ENCODE measurements at regions of chr17 and their contacts with region 1.

Region 1: DNA sequence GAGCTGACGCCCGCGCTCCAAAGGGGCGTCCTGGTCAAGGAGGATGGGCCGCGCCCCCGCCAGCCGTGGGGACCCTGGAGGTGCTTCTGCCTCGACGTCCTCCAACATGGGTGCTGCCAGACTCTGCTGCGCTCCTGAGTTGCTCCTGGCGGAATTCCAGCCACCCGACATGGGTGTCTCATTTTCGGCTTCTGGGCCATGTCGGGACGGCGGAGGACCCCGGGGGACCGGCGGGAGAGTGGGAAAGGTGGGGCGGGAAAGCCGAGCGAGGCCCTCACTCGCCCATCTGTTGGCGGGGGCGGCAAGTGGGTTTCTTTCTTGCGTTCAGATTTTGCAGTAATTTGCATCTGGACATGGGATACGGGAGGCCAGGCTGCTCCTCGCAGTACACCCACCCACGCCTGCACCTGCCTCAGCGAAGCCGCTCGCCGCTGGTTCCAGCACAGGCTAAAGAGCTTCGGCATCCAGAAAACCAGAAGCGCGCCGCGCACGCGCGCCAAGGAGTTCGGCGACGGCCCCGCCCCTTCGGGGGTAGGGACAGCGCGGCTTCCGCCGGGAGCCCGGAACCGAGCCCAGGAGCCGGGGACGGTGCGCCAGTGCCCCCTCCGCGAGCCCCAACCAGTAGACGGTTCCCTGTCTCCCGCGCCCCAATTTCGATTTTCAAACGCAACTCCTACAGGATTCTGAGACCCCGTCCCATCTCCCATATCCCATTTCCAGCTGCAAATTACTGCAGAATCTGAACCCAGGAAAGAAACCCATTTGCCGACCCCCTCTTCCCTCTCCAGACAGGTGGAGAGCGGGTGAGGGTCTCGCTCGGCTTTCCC is at the start of gene ARMC7:
- DNase-seq: peak; percentile 92
- H3K4me3 Mint-ChIP-seq: peak within 1 kb of the TSS; percentile 84
- H3K27ac Mint-ChIP-seq: peak within 1 kb of the TSS; percentile 79
- H3K4me1 Mint-ChIP-seq: peaks cover 41% of the 10 kb centered on the region
- H3K27me3 Mint-ChIP-seq: no peaks in the 10 kb centered on the region
- total RNA-seq, gene ARMC7: 17.1 to 17.9 TPM

Region 2: DNA sequence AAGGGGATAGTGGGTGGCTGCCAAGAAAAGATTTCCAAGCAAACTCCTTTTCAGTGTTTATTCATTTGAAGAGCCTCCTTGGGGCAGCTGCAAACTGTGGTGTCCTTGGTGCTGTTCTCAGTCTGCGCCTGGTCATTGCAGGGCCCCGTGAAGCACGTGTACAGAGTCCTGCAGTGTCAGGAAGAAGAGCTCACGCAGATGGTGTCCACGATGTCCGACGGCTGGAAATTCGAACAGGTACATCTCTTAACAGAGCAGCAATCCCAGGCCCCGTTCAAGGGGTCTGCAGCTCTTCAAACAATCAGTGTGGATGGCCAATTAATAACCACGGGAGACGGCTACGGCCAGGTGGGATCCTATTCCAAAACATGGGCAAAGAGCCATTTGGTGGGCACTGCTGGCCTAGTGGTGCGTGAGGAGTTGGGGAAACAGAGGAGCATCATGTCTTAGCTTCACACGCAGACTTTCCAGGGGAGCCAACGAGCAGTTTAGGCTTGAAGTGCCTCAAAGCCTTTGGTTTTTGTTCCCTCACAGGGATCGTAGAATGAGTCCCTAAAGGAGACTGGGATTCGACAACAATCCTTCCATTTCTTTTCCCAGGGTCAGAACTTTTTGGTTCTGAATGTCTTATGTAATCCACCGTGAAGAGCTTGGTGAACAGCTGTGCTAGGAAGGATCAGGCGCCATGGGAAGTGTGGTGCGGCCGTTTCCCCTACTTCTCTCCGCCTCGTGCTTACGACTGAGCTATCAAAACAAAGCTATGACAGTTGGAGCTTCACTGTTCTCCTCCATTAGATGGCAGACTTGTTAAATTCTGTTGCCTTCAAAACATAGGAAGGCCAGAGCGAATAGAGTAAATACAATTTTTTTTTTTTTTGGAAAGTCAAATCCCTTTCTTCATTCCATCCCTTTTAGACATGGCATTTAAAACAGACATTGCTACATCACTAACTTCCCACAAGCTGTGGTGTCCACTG is 50.0 kb before region 1 on chr17:
- CTCF ChIA-PET with region 1: interaction called, 19 read pairs
- POLR2A ChIA-PET with region 1: interaction called, 5 read pairs
- DNase-seq: no peak
- H3K4me3 Mint-ChIP-seq: no peak overlapping the region
- H3K27ac Mint-ChIP-seq: no peak overlapping the region
- H3K4me1 Mint-ChIP-seq: peaks cover 13% of the 10 kb centered on the region
- H3K27me3 Mint-ChIP-seq: no peaks in the 10 kb centered on the region

Region 3: DNA sequence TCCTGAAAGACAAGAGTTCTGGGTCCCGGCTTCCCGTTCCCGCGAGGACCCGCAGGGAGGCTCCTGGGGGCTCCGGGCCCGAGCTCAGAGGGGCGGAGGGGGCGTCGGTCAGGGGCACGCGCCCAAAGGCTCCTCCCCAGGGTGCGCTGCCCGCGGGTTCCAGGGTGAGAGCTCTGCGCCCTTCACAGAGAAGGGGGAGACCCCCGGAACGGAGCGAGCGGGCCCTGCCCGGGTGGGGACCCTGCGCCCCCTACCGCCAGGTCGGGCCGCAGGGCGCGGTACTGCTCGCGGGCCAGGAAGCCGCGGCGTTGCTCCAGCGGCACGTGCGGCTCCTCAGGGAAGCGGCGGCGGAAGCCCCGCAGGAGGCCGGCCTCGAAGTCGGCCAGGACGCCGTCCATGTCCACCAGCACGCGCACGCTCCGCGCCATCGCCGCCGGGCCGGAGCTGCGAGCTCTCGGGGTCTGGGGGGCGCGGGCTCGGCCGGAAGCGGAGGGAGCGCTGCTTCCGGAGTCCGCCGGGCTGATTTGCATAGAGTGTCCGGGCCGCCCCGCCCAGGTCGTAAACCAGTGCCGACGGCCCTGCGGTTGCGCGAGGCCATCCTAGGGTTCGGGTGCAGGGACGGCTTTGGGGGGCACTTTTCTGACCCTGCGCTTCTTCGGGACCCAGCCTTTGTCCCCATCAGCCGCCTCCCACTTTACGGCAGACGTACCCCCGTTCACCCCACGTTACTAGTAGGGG is 21.8 kb after region 1 on chr17 and contains the start of gene NT5C:
- CTCF ChIA-PET with region 1: interaction called, 130 read pairs
- POLR2A ChIA-PET with region 1: interaction called, 65 read pairs
- DNase-seq: peak; percentile 75
- H3K4me3 Mint-ChIP-seq: peak within 1 kb of the TSS; percentile 86
- H3K27ac Mint-ChIP-seq: peak within 1 kb of the TSS; percentile 85
- H3K4me1 Mint-ChIP-seq: peaks cover 41% of the 10 kb centered on the region
- H3K27me3 Mint-ChIP-seq: no peaks in the 10 kb centered on the region
- total RNA-seq, gene NT5C: 68.2 to 69.4 TPM

Region 4: GRCh38 chr17:75173526-75173925 is 63.9 kb after region 1 on chr17:
- CTCF ChIA-PET with region 1: interaction called, 119 read pairs
- POLR2A ChIA-PET with region 1: interaction called, 27 read pairs
- DNase-seq: no peak
- H3K4me3 Mint-ChIP-seq: no peak overlapping the region
- H3K27ac Mint-ChIP-seq: no peak overlapping the region
- H3K4me1 Mint-ChIP-seq: peaks cover 32% of the 10 kb centered on the region
- H3K27me3 Mint-ChIP-seq: no peaks in the 10 kb centered on the region

Region 5: DNA sequence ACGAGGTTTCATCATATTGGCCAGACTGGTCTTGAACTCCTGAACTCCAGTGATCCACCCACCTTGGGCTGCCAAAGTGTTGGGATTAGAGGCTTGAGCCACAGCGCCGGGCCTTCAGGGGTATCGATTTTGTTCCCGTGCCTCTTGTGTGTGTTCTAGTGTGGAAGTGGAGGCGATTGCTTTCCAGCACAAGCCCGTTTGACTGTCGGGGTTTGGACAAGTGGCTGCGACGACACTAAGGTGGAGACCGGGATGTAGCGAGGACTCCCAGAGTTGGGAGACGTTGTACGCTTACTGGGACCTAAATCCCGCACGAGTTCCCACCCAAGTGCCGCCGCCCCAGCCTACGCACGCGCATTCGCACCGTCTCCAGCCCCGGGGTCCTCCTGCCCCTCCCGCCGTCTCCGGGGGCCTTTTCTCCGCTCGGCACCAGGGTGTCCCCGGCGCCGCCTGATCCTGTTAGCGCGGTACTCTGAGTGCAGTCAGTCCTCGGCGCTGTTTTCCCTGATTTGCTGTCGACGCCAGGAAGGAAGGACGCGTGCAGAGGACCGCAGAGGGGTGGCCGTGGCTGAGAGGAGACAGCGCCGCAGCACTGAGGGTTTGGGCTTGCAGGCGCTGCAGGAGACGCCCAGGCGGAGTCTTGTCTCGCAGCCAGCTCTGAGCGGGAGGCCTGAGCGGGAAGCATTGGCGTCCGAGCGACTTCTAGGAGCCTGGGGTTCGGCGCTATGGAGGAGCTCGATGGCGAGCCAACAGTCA is 95.6 kb after region 1 on chr17 and contains the start of gene NUP85:
- CTCF ChIA-PET with region 1: interaction called, 158 read pairs
- POLR2A ChIA-PET with region 1: interaction called, 22 read pairs
- DNase-seq: peak; percentile 91
- H3K4me3 Mint-ChIP-seq: peak within 1 kb of the TSS; percentile 86
- H3K27ac Mint-ChIP-seq: peak within 1 kb of the TSS; percentile 97
- H3K4me1 Mint-ChIP-seq: peaks cover 36% of the 10 kb centered on the region
- H3K27me3 Mint-ChIP-seq: no peaks in the 10 kb centered on the region
- total RNA-seq, gene NUP85: 109 to 116 TPM

Measured in activated CD4-positive, alpha-beta memory T cell treated with anti-CD3 and anti-CD28 coated beads, Interleukin-2, amount 10 ng/mL, durations not matched to agents 7 days and 5 days (primary cell).